ENCODE measurements at regions of chr12 and their contacts with region 1.

Region 1: DNA sequence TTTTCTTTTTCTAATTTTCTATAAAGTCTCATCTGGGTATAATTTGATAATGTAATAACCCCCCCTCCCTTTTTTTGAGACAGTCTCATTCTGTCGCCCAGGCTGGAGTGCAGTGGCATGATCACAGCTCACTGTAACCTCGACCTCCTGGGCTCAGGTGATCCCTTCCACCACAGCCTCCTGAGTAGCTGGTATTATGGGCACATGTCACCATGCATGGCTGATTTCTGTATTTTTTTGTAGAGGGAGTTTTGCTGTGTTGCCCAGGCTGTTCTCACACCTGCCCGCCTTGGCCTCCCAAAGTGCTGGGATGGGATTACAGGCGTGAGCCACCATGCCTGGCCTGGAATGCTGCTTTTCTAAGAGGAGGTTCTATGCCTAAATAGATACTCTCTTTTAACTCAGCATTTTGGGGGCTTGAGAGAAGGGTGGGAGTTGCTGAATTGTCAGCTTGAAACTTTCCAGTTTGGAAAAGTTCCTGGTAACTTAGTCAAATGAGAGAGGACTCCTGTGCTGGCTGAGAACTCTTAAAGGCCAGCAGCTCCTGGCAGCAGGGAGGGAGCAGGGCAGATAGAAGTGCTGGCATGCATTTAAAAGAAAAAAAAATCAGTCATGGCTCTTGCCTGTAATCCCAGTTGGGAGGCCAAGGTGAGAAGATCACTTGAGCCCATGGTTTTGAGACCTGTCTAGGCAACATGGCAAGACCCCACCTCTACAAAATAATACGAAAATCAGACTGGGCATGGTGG is 13.0 kb downstream of the NUDT4 start:
- DNase-seq: no peak
- ATAC-seq: no peak
- H3K4me3 ChIP-seq: no peak overlapping the region
- H3K27ac ChIP-seq: peak overlapping the region in 2 of 4 donors; percentile 40 to 57
- H3K4me1 ChIP-seq: peaks cover 54% of the 10 kb centered on the region
- H3K27me3 ChIP-seq: no peaks in the 10 kb centered on the region
- CTCF ChIP-seq: no peak
- POLR2A ChIP-seq: no peak

Region 2: DNA sequence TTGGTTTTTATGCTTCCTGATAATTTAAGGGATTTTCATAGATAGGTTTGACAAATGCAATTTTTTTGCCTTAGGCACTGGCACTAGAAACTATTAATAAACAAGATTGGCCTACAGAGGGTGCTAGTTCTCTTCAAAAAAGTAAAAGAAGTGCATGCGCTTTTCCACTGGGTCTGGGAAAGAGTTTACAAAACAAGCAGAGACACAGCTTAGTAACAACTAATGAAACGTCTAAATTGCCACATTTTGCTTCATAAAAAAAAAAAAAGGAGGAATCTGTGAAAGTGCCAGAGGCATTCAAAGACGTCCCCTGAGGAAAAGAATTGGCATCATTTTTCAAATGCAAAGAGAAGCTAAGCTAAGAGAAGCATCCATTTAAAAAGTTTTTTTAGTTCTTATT is 403.4 kb before region 1 on chr12:
- intact Hi-C with region 1: loop called (anchors 10 kb)
- DNase-seq: peak in 3 of 4 donors; percentile 27 to 67 (median 36)
- ATAC-seq: peak; percentile 77
- H3K4me3 ChIP-seq: no peak overlapping the region
- H3K27ac ChIP-seq: peak overlapping the region; percentile 26 to 77 (median 50)
- H3K4me1 ChIP-seq: peaks cover 31% of the 10 kb centered on the region
- H3K27me3 ChIP-seq: no peaks in the 10 kb centered on the region
- CTCF ChIP-seq: peak in 6 of 7 experiments; percentile 32 to 83 (median 74)
- POLR2A ChIP-seq: no peak

Region 3: DNA sequence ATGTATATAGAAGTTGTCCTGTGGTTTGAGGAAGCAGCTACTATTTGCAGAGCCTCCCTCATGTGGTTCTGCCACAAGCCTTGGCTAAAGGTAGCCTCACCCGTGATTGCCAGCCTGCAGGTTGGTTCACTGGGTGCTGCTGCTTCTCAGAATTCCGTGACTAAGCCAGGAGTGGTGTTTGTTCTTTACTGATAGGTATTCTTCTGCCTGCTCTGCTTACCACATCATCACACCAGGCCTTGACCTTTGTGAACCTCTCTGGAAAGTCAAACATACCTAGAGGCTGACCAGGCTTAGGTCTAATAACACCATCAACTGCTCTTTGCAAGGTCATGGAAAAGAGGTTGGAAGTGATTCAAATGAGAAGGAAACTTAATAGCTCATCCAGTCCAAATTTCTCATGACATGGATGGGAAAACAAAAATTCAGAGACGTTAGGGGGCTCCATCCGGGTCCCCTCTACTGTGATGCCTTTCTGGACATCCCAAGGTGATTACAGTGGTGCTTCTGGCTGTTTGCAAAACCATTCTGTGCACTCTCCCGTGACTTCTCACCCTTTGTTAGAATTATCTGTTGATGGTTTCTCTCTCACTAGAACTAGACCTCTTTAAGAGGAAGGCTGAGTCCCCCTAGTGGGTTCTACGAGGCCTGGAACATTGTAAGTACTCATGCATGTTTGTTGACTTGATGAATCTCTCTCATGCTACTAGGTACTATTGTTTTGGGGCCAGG is 173.2 kb after region 1 on chr12:
- intact Hi-C with region 1: no loop called
- DNase-seq: peak in 3 of 4 donors; percentile 18 to 31 (median 20)
- ATAC-seq: peak; percentile 80
- H3K4me3 ChIP-seq: no peak overlapping the region
- H3K27ac ChIP-seq: no peak overlapping the region
- H3K4me1 ChIP-seq: no peaks in the 10 kb centered on the region
- H3K27me3 ChIP-seq: no peaks in the 10 kb centered on the region
- CTCF ChIP-seq: no peak
- POLR2A ChIP-seq: no peak

Measured in body of pancreas (tissue), 4 donors.